Activated CD8-positive, alpha-beta T cell treated with anti-CD3 and anti-CD28 coated beads, Interleukin-2, amount 10 ng/mL, durations not matched to agents 7 days and 5 days (primary cell): ENCODE measurements at regions of chr16 and their contacts with region 1.

Region 1: DNA sequence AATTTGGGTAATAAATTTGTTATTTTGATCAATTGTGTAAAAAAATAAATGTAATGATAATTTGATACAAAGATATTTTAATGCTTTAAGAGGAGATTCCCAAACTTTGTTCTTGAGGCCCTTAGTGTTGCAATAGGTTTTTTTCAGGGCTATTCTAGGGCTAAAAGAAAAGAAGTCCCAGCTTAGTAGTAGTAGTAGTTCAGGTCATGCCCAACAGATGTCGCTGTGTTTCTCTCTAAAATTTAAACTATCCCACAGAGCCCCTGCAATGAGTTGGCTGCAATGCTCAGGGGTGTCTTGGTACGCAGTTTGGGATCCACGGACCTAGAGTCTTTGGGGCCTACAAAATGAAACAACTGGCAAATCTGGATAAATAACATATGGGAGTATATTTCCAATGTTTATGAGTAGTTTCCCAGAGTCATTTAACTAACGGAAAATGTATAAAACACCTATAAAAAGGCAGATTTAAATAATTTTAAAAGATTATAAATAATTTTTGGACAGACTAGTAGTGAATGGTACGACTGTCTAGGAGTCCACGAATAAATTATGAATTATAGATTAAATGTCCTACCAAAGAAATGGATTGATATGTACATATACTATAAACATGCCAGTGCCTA is 228.4 kb upstream of the PMFBP1 start:
- DNase-seq: peak; percentile 54
- ATAC-seq: no peak
- H3K4me3 Mint-ChIP-seq: no peak overlapping the region
- H3K27ac Mint-ChIP-seq: no peak overlapping the region
- H3K4me1 Mint-ChIP-seq: no peaks in the 10 kb centered on the region
- H3K27me3 Mint-ChIP-seq: no peaks in the 10 kb centered on the region

Region 2: GRCh38 chr16:72380283-72380682 is 20.1 kb before region 1 on chr16:
- CTCF ChIA-PET with region 1: interaction called, 11 read pairs
- POLR2A ChIA-PET with region 1: interaction called, 3 read pairs
- DNase-seq: no peak
- ATAC-seq: no peak
- H3K4me3 Mint-ChIP-seq: no peak overlapping the region
- H3K27ac Mint-ChIP-seq: no peak overlapping the region
- H3K4me1 Mint-ChIP-seq: no peaks in the 10 kb centered on the region
- H3K27me3 Mint-ChIP-seq: no peaks in the 10 kb centered on the region

Region 3: GRCh38 chr16:72493716-72494415 is 93.5 kb after region 1 on chr16:
- CTCF ChIA-PET with region 1: no interaction called
- POLR2A ChIA-PET with region 1: no interaction called
- DNase-seq: no peak
- ATAC-seq: no peak
- H3K4me3 Mint-ChIP-seq: no peak overlapping the region
- H3K27ac Mint-ChIP-seq: no peak overlapping the region
- H3K4me1 Mint-ChIP-seq: no peaks in the 10 kb centered on the region
- H3K27me3 Mint-ChIP-seq: no peaks in the 10 kb centered on the region

Region 4: GRCh38 chr16:72818236-72818845 is 418.0 kb after region 1 on chr16:
- CTCF ChIA-PET with region 1: no interaction called
- POLR2A ChIA-PET with region 1: no interaction called
- DNase-seq: no peak
- ATAC-seq: no peak
- H3K4me3 Mint-ChIP-seq: no peak overlapping the region
- H3K27ac Mint-ChIP-seq: no peak overlapping the region
- H3K4me1 Mint-ChIP-seq: peaks cover 5% of the 10 kb centered on the region
- H3K27me3 Mint-ChIP-seq: peaks cover 17% of the 10 kb centered on the region